ENCODE measurements at regions of chr18 and their contacts with region 1.

Region 1: GRCh38 chr18:46754188-46754587 is 2.7 kb downstream of the ST8SIA5 start:
- DNase-seq: no peak
- H3K4me3 ChIP-seq: no peak overlapping the region
- H3K27ac ChIP-seq: no peak overlapping the region
- H3K4me1 ChIP-seq: peaks cover 16 to 31% (median 18%) of the 10 kb centered on the region in 3 donors
- H3K27me3 ChIP-seq: peaks cover 12 to 66% (median 16%) of the 10 kb centered on the region in 4 donors
- CTCF ChIP-seq: no peak
- POLR2A ChIP-seq: no peak

Region 2: DNA sequence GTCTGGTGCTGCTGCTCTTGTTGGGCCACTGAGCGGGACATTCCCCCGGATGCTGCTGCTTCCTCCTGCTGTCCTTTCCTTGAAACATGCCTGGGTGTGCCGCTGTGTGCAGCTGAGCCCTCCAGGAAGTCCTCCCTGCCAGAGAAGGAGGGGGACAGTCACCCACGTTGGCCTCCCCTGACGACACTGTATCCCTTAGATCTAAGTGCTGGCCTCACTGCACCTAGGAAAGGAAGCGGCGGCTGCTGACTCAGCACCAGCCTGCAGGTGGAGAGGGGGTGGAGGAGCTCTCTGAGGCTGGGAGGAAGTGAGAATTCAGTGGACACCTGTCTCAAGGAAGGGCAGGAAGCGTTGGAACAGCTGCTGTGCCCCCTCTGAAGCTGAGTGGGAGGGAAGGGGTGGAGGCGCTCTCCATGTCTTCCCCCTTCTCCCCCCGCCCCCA is 410.2 kb before region 1 on chr18:
- intact Hi-C with region 1: no loop called
- DNase-seq: no peak
- H3K4me3 ChIP-seq: no peak overlapping the region
- H3K27ac ChIP-seq: no peak overlapping the region
- H3K4me1 ChIP-seq: peaks cover 8 to 17% (median 12%) of the 10 kb centered on the region in 3 donors
- H3K27me3 ChIP-seq: no peaks in the 10 kb centered on the region
- CTCF ChIP-seq: peak in 1 of 6 experiments; percentile 8
- POLR2A ChIP-seq: no peak

Region 3: DNA sequence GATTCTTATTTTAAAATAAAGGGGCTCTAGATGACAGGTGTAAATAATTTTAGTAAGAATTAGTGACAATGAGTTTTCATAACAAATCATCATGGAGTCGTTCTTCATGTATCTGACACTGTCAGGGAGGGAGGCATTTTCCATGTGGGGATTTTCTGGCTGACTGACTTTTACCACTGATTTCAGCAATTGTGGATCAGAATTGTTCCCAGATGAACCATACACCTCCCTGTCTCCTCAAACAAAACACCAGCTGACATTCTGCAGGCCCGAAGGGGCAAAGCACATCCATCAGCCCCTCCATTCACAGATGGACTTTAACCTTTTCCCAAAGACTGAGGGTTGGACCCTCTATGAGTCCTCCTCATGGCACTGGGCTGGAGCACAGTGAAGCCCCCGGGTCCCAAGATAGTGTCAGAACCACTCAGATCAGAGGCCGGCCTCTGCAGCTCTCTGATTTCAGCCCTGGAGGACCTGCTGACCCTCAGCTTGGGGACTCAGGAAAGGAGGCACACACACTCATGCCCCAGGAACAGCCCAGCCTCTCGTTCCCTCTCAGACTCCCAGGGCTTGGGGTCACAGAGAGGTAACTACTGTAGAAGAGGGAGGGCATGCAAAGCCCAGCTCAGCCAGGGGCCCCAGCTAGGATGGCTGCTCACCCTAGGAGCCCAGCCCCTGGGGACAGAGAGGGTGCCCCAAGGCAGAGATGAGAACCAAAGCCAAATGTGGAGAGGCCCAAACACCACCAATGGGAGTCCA is 53.9 kb before region 1 on chr18:
- intact Hi-C with region 1: loop called (anchors 5 kb)
- DNase-seq: no peak
- H3K4me3 ChIP-seq: no peak overlapping the region
- H3K27ac ChIP-seq: no peak overlapping the region
- H3K4me1 ChIP-seq: no peaks in the 10 kb centered on the region
- H3K27me3 ChIP-seq: peaks cover 0 to 6% (median 0%) of the 10 kb centered on the region in 4 donors
- CTCF ChIP-seq: no peak
- POLR2A ChIP-seq: no peak

Region 4: DNA sequence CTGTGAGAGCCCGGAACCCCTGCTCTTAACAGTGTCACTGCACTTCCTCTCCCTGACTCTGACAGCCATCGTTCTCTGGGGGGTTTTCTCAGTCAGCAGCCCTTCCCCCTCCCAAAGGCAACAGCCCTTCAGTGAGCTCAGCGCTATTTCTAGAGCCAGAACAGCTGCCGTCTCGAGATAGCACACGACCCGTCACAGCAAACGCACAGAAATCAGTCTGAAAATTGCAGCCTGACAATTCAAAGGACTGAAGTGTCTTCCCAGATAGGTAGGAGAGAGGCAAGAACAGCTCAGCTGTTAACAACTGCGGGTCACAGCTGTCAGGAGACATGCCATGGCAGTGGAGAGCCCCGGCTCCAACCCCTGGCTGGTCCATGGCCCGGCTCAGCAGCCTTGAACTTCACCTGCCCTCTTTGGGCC is 42.7 kb before region 1 on chr18:
- intact Hi-C with region 1: no loop called
- DNase-seq: no peak
- H3K4me3 ChIP-seq: no peak overlapping the region
- H3K27ac ChIP-seq: no peak overlapping the region
- H3K4me1 ChIP-seq: no peaks in the 10 kb centered on the region
- H3K27me3 ChIP-seq: peaks cover 0 to 9% (median 0%) of the 10 kb centered on the region in 4 donors
- CTCF ChIP-seq: no peak
- POLR2A ChIP-seq: no peak

Measured in esophagus squamous epithelium (tissue), 5 donors.